ENCODE measurements at regions of chr17 and their contacts with region 1.

Region 1: DNA sequence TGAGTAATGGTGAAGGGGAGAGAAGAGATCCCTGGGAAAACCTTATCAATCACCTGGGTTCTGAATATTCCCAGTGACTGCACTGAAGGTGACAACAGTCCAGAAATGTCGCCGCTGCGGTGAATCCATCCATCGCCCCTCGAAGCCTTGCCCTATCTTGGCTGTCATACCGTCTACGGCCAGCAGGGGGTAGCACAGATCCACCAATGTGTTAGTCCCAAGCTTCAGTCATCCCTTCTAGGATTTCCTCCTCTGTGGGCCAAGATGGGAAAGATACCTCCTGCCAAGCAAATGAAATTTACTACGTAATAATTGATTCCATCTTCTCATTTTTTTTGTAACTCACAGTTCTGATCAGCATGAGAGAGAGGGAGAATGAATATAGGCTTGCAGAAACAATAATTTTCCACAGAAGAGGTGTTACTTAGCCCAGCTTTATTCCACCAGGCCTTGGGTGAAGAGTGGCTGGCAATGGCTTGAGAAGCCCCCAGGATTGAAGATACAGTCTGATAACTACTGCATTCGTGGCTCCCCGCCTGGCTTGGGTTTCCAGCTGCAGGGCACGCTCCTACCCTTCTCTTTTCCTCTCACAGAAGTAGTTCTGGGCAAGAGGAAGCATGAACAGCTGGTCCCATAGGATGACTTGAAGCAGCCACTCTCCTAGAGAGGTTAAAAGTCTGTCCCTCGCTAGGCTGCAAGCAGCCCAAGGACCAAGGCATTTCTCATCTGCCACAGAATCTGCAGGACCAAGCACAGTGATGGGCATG is 2.6 kb upstream of the FMNL1 start:
- DNase-seq: peak; percentile 94
- ATAC-seq: peak; percentile 12
- H3K4me3 Mint-ChIP-seq: peak overlapping the region; percentile 94
- H3K27ac Mint-ChIP-seq: peak overlapping the region; percentile 63
- H3K4me1 Mint-ChIP-seq: peaks cover 26% of the 10 kb centered on the region
- H3K27me3 Mint-ChIP-seq: no peaks in the 10 kb centered on the region
- CTCF ChIP-seq: peak; percentile 99

Region 2: GRCh38 chr17:45235416-45236281 is 16.6 kb after region 1 on chr17:
- CTCF ChIA-PET with region 1: interaction called, 406 read pairs
- POLR2A ChIA-PET with region 1: interaction called, 399 read pairs
- intact Hi-C with region 1: loop called (anchors 1 kb)
- DNase-seq: peak; percentile 92
- ATAC-seq: peak; percentile 63
- H3K4me3 Mint-ChIP-seq: no peak overlapping the region
- H3K27ac Mint-ChIP-seq: peak overlapping the region; percentile 99
- H3K4me1 Mint-ChIP-seq: peaks cover 55% of the 10 kb centered on the region
- H3K27me3 Mint-ChIP-seq: no peaks in the 10 kb centered on the region
- CTCF ChIP-seq: peak; percentile 76

Region 3: DNA sequence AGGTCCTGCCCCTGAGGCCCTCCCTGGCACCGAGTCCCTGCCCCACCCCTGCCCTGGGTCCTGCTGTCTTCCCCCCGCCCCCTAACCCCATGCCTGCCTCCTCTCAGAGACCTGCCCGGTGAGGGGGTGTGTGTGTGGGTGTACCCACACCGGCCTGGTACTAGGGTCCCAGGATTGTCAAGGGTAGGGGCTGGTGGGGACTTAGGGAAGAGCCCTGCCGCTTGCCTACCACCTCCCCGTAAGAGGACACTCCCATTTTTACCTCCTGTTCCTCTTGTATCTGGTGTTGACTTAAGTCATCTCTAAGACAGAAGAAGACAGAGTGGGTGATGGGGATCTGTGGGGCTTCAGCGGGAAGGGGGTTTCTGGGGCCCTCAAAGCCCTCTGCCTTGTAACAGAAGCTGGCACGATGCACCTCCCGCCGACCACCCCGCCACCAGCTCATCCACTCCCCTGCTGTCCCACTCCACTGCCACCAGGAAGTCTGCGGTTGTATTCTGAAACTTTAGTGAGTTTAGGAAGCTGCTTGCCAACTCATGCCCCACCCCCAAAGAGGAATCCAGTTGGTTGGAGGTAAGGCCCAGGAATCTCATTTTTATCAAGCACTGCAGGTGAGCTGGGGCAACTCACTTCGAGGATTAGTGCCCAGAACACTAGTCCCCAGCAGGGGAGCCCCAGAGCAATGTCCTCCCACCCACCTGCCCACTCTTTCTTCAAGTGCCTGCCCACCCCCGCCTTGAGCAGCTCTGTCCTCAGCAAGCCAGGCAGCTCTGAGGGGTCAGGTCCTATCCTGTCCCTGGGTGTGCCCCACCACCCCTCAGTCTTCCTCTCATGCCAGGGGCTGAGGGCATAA is 37.3 kb after region 1 on chr17:
- CTCF ChIA-PET with region 1: interaction called, 19 read pairs
- POLR2A ChIA-PET with region 1: interaction called, 4 read pairs
- intact Hi-C with region 1: loop called (anchors 5 kb)
- DNase-seq: peak; percentile 49
- ATAC-seq: peak; percentile 35
- H3K4me3 Mint-ChIP-seq: no peak overlapping the region
- H3K27ac Mint-ChIP-seq: peak overlapping the region; percentile 73
- H3K4me1 Mint-ChIP-seq: peaks cover 58% of the 10 kb centered on the region
- H3K27me3 Mint-ChIP-seq: no peaks in the 10 kb centered on the region
- CTCF ChIP-seq: peak; percentile 37

Region 4: DNA sequence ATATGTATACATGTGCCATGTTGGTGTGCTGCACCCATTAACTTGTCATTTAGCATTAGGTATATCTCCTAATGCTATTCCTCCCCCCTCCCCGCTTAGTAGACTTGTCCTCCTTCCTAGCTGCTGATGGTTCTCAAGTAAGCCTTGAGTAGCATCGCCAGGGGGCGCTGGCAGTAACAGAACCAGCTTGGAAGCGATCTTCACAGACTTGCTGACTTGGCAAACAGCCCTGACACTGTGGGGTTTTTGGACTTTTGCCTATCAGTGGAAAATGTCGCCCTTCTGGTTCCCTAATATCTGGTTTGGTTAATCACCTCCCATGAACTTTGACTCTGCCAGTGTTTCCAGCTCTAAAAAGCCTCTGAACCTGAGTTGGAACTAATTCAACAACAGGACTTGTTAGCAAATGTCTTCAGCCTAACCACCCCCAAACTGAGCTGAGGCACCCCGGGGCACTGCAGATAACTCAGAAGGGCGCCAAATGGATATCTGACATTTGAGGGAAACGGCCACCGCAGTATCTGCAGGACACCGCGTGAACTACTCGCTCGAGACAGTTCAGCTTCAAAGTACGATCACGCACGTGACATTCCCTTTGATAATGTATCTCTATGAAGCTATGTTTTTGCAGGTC is 58.3 kb after region 1 on chr17:
- CTCF ChIA-PET with region 1: interaction called, 49 read pairs
- POLR2A ChIA-PET with region 1: no interaction called
- intact Hi-C with region 1: no loop called
- DNase-seq: peak; percentile 98
- ATAC-seq: peak; percentile 95
- H3K4me3 Mint-ChIP-seq: no peak overlapping the region
- H3K27ac Mint-ChIP-seq: peak overlapping the region; percentile 53
- H3K4me1 Mint-ChIP-seq: peaks cover 15% of the 10 kb centered on the region
- H3K27me3 Mint-ChIP-seq: no peaks in the 10 kb centered on the region
- CTCF ChIP-seq: peak; percentile 78

Region 5: GRCh38 chr17:45307290-45308015 is 88.4 kb after region 1 on chr17:
- CTCF ChIA-PET with region 1: interaction called, 47 read pairs
- POLR2A ChIA-PET with region 1: interaction called, 211 read pairs
- intact Hi-C with region 1: no loop called
- DNase-seq: peak; percentile 81
- ATAC-seq: peak; percentile 58
- H3K4me3 Mint-ChIP-seq: peak overlapping the region; percentile 36
- H3K27ac Mint-ChIP-seq: peak overlapping the region; percentile 95
- H3K4me1 Mint-ChIP-seq: peaks cover 83% of the 10 kb centered on the region
- H3K27me3 Mint-ChIP-seq: no peaks in the 10 kb centered on the region
- CTCF ChIP-seq: no peak